ENCODE measurements at regions of chr9 and their contacts with region 1.

Region 1: DNA sequence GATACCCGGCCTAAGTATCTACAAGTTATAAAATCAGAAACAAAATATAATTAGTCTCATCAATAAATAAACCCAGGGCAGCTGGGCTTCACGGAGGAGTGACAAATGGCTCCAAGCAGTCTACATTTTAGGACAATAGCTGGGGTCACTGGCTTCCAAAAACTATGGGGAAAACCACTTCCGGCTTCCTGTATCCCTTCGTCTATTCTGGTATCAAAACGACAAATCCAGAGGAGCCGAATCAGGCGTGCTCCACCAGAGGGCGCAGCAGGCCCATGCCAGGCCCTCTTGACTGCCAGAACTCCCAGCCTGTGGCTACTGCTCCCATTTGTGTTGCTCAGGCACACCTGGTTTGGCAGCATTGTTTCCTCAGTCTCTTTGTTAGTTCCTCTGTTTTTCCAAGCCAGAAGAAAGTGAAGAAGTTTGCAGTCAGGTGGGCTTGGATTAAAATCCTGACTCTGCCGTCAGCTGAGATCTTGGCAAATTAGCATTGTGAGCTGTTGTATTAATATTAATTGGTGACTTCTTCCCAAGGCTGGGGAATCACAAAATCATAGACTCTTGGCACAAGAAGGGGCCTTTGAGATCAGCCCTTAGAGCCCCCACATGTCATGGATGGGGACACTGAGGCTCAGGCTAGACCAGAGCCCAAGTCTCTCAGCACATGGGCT is 11.6 kb upstream of the RAB14 start:
- DNase-seq: peak; percentile 87 to 90
- H3K4me3 ChIP-seq: no peak overlapping the region
- H3K4me3 Mint-ChIP-seq: no peak overlapping the region
- H3K27ac Mint-ChIP-seq: no peak overlapping the region
- H3K4me1 ChIP-seq: no peaks in the 10 kb centered on the region
- H3K4me1 Mint-ChIP-seq: no peaks in the 10 kb centered on the region
- H3K27me3 ChIP-seq: no peaks in the 10 kb centered on the region
- H3K27me3 Mint-ChIP-seq: no peaks in the 10 kb centered on the region
- CTCF ChIP-seq: peak; percentile 88 to 95

Region 2: GRCh38 chr9:121267689-121268597 is 54.7 kb after region 1 on chr9 and contains the start of gene GSN:
- CTCF ChIA-PET with region 1: interaction called, 4 read pairs
- POLR2A ChIA-PET with region 1: no interaction called
- intact Hi-C with region 1: loop called (anchors 2 kb)
- DNase-seq: peak; percentile 74 to 82
- H3K4me3 ChIP-seq: peak within 1 kb of the TSS; percentile 73
- H3K4me3 Mint-ChIP-seq: peak within 1 kb of the TSS; percentile 87
- H3K27ac Mint-ChIP-seq: peak within 1 kb of the TSS; percentile 76
- H3K4me1 ChIP-seq: peaks cover 24% of the 10 kb centered on the region
- H3K4me1 Mint-ChIP-seq: peaks cover 25% of the 10 kb centered on the region
- H3K27me3 ChIP-seq: no peaks in the 10 kb centered on the region
- H3K27me3 Mint-ChIP-seq: no peaks in the 10 kb centered on the region
- CTCF ChIP-seq: peak in 1 of 2 experiments; percentile 2
- total RNA-seq, gene GSN: 99.6 and 100 TPM in 2 replicates

Region 3: GRCh38 chr9:121286973-121287741 is 73.9 kb after region 1 on chr9:
- CTCF ChIA-PET with region 1: interaction called, 8 read pairs
- POLR2A ChIA-PET with region 1: no interaction called
- intact Hi-C with region 1: loop called (anchors 1 kb)
- DNase-seq: peak; percentile 88 to 96
- H3K4me3 ChIP-seq: no peak overlapping the region
- H3K4me3 Mint-ChIP-seq: peak overlapping the region; percentile 62
- H3K27ac Mint-ChIP-seq: peak overlapping the region; percentile 99
- H3K4me1 ChIP-seq: peaks cover 53% of the 10 kb centered on the region
- H3K4me1 Mint-ChIP-seq: peaks cover 56% of the 10 kb centered on the region
- H3K27me3 ChIP-seq: no peaks in the 10 kb centered on the region
- H3K27me3 Mint-ChIP-seq: no peaks in the 10 kb centered on the region
- CTCF ChIP-seq: peak; percentile 28 to 53

Region 4: GRCh38 chr9:121376214-121376830 is 163.1 kb after region 1 on chr9:
- CTCF ChIA-PET with region 1: no interaction called
- POLR2A ChIA-PET with region 1: no interaction called
- intact Hi-C with region 1: loop called (anchors 5 kb)
- DNase-seq: no peak
- H3K4me3 ChIP-seq: no peak overlapping the region
- H3K4me3 Mint-ChIP-seq: no peak overlapping the region
- H3K27ac Mint-ChIP-seq: no peak overlapping the region
- H3K4me1 ChIP-seq: peaks cover 36% of the 10 kb centered on the region
- H3K4me1 Mint-ChIP-seq: peaks cover 30% of the 10 kb centered on the region
- H3K27me3 ChIP-seq: no peaks in the 10 kb centered on the region
- H3K27me3 Mint-ChIP-seq: no peaks in the 10 kb centered on the region
- CTCF ChIP-seq: peak in 1 of 2 experiments; percentile 28

Region 5: GRCh38 chr9:121439711-121440664 is 226.7 kb after region 1 on chr9:
- CTCF ChIA-PET with region 1: interaction called, 3 read pairs
- POLR2A ChIA-PET with region 1: no interaction called
- intact Hi-C with region 1: loop called (anchors 1 kb)
- DNase-seq: peak in 1 of 2 experiments; percentile 20
- H3K4me3 ChIP-seq: no peak overlapping the region
- H3K4me3 Mint-ChIP-seq: no peak overlapping the region
- H3K27ac Mint-ChIP-seq: no peak overlapping the region
- H3K4me1 ChIP-seq: no peaks in the 10 kb centered on the region
- H3K4me1 Mint-ChIP-seq: no peaks in the 10 kb centered on the region
- H3K27me3 ChIP-seq: no peaks in the 10 kb centered on the region
- H3K27me3 Mint-ChIP-seq: no peaks in the 10 kb centered on the region
- CTCF ChIP-seq: peak; percentile 29 to 48